MCF 10A (cell line): ENCODE measurements at regions of chr3 and their contacts with region 1.

Region 1: DNA sequence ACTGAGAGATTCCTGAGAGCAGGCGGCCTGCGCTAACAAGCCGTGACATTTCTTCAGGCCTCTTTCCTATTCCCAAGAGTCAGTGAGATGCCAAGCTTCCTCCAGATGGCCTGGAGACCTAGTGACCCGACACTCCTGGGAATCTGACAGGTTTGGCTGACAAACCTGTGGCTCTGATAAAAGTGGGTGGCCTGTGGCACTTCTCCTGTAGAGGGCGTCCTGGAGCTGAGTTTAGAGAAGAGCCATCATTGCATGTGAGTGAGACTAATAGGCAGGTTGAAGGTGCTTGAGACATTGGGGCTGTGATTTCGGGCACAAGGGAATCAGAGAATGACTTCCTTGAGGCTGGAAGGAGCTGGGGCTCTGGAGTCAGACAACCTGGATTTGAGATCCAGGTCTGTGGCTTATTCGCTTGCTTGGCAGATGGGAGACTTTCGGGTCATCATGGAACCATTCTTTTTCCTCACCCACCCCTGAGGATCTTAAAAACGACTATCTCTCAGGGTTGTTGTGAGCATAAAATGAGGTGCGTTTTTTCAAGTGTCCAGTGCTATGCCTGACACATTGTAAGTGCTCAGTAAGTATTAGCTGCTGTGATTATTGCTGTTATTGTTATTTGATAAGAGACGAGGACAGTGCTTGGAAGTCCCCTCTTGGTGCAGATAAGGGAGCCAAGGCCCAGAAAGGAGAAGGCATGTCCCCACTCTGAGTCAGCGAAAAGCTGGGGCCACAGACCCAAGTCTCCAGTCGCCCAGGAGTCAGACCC is 77.2 kb downstream of the SCN10A start:
- DNase-seq: peak; percentile 71
- H3K4me3 Mint-ChIP-seq: no peak overlapping the region
- H3K27ac Mint-ChIP-seq: no peak overlapping the region
- H3K4me1 Mint-ChIP-seq: no peaks in the 10 kb centered on the region
- H3K27me3 Mint-ChIP-seq: peaks cover 22% of the 10 kb centered on the region
- CTCF ChIP-seq: peak; percentile 27

Region 2: DNA sequence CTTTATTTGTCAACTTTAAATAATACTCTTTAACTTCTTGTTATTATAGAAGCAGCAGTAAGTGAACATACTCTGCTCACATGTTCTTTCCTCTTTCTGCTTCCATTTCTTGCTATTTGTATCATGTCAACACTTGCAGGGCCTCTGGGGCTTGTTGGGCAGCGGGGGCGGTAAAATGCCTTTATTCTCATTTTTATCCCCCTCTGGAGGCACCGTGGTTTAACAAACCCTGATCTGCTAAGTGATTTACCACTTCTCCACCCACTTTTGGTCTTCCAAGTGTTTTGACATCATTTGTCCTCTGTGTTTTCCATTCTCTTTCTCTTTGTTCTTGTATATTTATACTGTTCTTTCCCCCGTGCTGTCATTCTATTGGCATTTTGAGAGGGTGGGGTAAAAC is 43.3 kb after region 1 on chr3:
- CTCF ChIA-PET with region 1: no interaction called
- POLR2A ChIA-PET with region 1: no interaction called
- intact Hi-C with region 1: no loop called
- DNase-seq: no peak
- H3K4me3 Mint-ChIP-seq: no peak overlapping the region
- H3K27ac Mint-ChIP-seq: no peak overlapping the region
- H3K4me1 Mint-ChIP-seq: no peaks in the 10 kb centered on the region
- H3K27me3 Mint-ChIP-seq: peaks cover 44% of the 10 kb centered on the region
- CTCF ChIP-seq: no peak

Region 3: GRCh38 chr3:38843898-38844297 is 105.1 kb after region 1 on chr3:
- CTCF ChIA-PET with region 1: no interaction called
- POLR2A ChIA-PET with region 1: no interaction called
- intact Hi-C with region 1: loop called (anchors 2 kb)
- DNase-seq: peak; percentile 55
- H3K4me3 Mint-ChIP-seq: no peak overlapping the region
- H3K27ac Mint-ChIP-seq: no peak overlapping the region
- H3K4me1 Mint-ChIP-seq: no peaks in the 10 kb centered on the region
- H3K27me3 Mint-ChIP-seq: peaks cover 71% of the 10 kb centered on the region
- CTCF ChIP-seq: peak; percentile 53

Region 4: DNA sequence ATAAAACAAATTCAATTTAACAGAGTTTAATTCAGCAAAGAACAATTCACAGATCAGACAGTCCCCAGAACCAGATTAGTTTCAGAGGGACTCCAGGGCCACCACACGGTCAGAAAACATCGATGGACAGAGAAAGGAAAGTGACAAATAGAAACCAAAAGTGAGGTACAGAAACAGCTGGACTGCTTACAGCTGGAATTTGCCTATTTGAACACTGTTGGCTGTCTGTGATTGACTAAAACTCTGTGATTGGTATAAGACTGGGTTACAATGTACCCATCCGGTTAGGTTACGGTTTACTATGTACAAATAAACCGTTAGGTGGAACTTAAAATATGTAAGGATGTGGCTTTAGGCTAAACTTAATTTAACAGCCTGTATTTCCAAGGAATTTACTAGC is 758.9 kb after region 1 on chr3:
- CTCF ChIA-PET with region 1: no interaction called
- POLR2A ChIA-PET with region 1: no interaction called
- intact Hi-C with region 1: no loop called
- DNase-seq: no peak
- H3K4me3 Mint-ChIP-seq: no peak overlapping the region
- H3K27ac Mint-ChIP-seq: no peak overlapping the region
- H3K4me1 Mint-ChIP-seq: peaks cover 6% of the 10 kb centered on the region
- H3K27me3 Mint-ChIP-seq: peaks cover 39% of the 10 kb centered on the region
- CTCF ChIP-seq: no peak